Activated B cell treated with CpG ODN at 0.5 μM for 24 hours (primary cell): ENCODE measurements at regions of chr2 and their contacts with region 1.

Region 1: GRCh38 chr2:57759822-57760300 is 286.7 kb upstream of the VRK2 start:
- DNase-seq: peak; percentile 77
- ATAC-seq: peak; percentile 92
- H3K4me3 Mint-ChIP-seq: peak overlapping the region; percentile 72
- H3K27ac Mint-ChIP-seq: no peak overlapping the region
- H3K4me1 Mint-ChIP-seq: peaks cover 28% of the 10 kb centered on the region
- H3K27me3 Mint-ChIP-seq: no peaks in the 10 kb centered on the region
- CTCF ChIP-seq: peak; percentile 98

Region 2: GRCh38 chr2:58046585-58047372 is 286.9 kb after region 1 on chr2 and contains the start of gene VRK2:
- CTCF ChIA-PET with region 1: no interaction called
- POLR2A ChIA-PET with region 1: no interaction called
- intact Hi-C with region 1: loop called (anchors 1 kb)
- DNase-seq: peak; percentile 87
- ATAC-seq: peak; percentile 91
- H3K4me3 Mint-ChIP-seq: peak within 1 kb of the TSS; percentile 91
- H3K27ac Mint-ChIP-seq: peak within 1 kb of the TSS; percentile 95
- H3K4me1 Mint-ChIP-seq: peaks cover 51% of the 10 kb centered on the region
- H3K27me3 Mint-ChIP-seq: no peaks in the 10 kb centered on the region
- CTCF ChIP-seq: no peak
- total RNA-seq, gene VRK2: 60.0 and 63.0 TPM in 2 replicates

Region 3: GRCh38 chr2:58571181-58571852 is 811.5 kb after region 1 on chr2:
- CTCF ChIA-PET with region 1: no interaction called
- POLR2A ChIA-PET with region 1: no interaction called
- intact Hi-C with region 1: loop called (anchors 5 kb)
- DNase-seq: no peak
- ATAC-seq: peak; percentile 61
- H3K4me3 Mint-ChIP-seq: no peak overlapping the region
- H3K27ac Mint-ChIP-seq: no peak overlapping the region
- H3K4me1 Mint-ChIP-seq: peaks cover 12% of the 10 kb centered on the region
- H3K27me3 Mint-ChIP-seq: no peaks in the 10 kb centered on the region
- CTCF ChIP-seq: no peak

Region 4: GRCh38 chr2:58762176-58762781 is 1002.4 kb after region 1 on chr2:
- CTCF ChIA-PET with region 1: interaction called, 10 read pairs
- POLR2A ChIA-PET with region 1: no interaction called
- intact Hi-C with region 1: loop called (anchors 2 kb)
- DNase-seq: peak; percentile 37
- ATAC-seq: peak; percentile 75
- H3K4me3 Mint-ChIP-seq: no peak overlapping the region
- H3K27ac Mint-ChIP-seq: no peak overlapping the region
- H3K4me1 Mint-ChIP-seq: peaks cover 6% of the 10 kb centered on the region
- H3K27me3 Mint-ChIP-seq: no peaks in the 10 kb centered on the region
- CTCF ChIP-seq: peak; percentile 60

Region 5: GRCh38 chr2:59025157-59025757 is 1265.4 kb after region 1 on chr2:
- CTCF ChIA-PET with region 1: interaction called, 4 read pairs
- POLR2A ChIA-PET with region 1: no interaction called
- intact Hi-C with region 1: loop called (anchors 5 kb)
- DNase-seq: peak; percentile 50
- ATAC-seq: peak; percentile 54
- H3K4me3 Mint-ChIP-seq: no peak overlapping the region
- H3K27ac Mint-ChIP-seq: no peak overlapping the region
- H3K4me1 Mint-ChIP-seq: peaks cover 2% of the 10 kb centered on the region
- H3K27me3 Mint-ChIP-seq: peaks cover 10% of the 10 kb centered on the region
- CTCF ChIP-seq: peak; percentile 45

Region 6: GRCh38 chr2:59301466-59302402 is 1541.9 kb after region 1 on chr2:
- CTCF ChIA-PET with region 1: no interaction called
- POLR2A ChIA-PET with region 1: no interaction called
- intact Hi-C with region 1: loop called (anchors 2 kb)
- DNase-seq: no peak
- ATAC-seq: peak; percentile 67
- H3K4me3 Mint-ChIP-seq: no peak overlapping the region
- H3K27ac Mint-ChIP-seq: no peak overlapping the region
- H3K4me1 Mint-ChIP-seq: no peaks in the 10 kb centered on the region
- H3K27me3 Mint-ChIP-seq: peaks cover 2% of the 10 kb centered on the region
- CTCF ChIP-seq: no peak

Region 7: DNA sequence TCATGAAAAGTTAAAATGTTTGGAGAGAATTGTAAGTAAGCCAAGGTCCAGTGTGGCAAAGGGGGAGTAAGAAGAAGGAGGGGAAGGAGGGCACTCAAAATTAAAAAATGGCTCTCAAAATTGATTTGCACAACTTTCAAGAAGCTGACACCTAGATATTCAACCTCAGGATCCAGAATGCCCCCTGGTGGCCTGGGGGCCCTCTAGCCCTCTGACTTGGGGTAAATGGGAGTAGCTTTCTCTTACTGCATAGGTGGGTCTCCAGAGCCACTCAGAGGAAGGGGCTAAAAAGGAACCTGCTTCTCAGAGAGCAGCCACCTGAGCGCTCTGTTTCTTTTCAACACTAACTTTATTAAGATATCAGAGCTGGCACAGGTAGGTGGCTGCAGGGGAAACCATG is 1825.1 kb after region 1 on chr2:
- CTCF ChIA-PET with region 1: no interaction called
- POLR2A ChIA-PET with region 1: no interaction called
- intact Hi-C with region 1: loop called (anchors 2 kb)
- DNase-seq: no peak
- ATAC-seq: no peak
- H3K4me3 Mint-ChIP-seq: no peak overlapping the region
- H3K27ac Mint-ChIP-seq: no peak overlapping the region
- H3K4me1 Mint-ChIP-seq: peaks cover 10% of the 10 kb centered on the region
- H3K27me3 Mint-ChIP-seq: no peaks in the 10 kb centered on the region
- CTCF ChIP-seq: no peak